ENCODE measurements at regions of chr12 and their contacts with region 1.

Region 1: DNA sequence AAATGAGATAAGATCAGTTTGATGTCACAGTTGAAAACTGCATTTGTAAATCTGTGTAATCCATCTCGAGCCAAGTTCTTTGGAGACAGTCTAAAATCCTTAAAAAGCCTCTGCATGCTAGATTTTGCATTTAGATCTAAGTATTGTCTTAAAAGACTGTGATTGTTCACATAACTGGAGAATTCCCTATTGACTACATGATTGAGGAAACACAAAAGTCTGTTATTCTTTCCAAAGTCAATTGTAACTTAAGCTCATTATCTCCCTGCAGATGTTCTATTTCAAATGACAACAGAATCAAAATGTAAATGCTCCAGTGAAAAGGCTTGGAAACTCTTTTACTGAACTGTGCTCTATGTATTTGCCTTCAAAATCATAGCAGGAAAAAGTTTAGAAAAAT is 77.8 kb downstream of the MYF5 start:
- DNase-seq: no peak
- ATAC-seq: no peak
- H3K4me3 ChIP-seq: no peak overlapping the region
- H3K27ac ChIP-seq: no peak overlapping the region
- H3K4me1 ChIP-seq: no peaks in the 10 kb centered on the region
- H3K27me3 ChIP-seq: no peaks in the 10 kb centered on the region
- CTCF ChIP-seq: no peak
- POLR2A ChIP-seq: no peak
- RAD21 ChIP-seq: no peak

Region 2: GRCh38 chr12:80513211-80513610 is 281.3 kb before region 1 on chr12:
- CTCF ChIA-PET with region 1: no interaction called
- POLR2A ChIA-PET with region 1: no interaction called
- dilution Hi-C with region 1: no loop called
- in situ Hi-C with region 1: no loop called
- intact Hi-C with region 1: no loop called
- DNase-seq: no peak
- ATAC-seq: no peak
- H3K4me3 ChIP-seq: no peak overlapping the region
- H3K27ac ChIP-seq: no peak overlapping the region
- H3K4me1 ChIP-seq: no peaks in the 10 kb centered on the region
- H3K27me3 ChIP-seq: no peaks in the 10 kb centered on the region
- CTCF ChIP-seq: no peak
- POLR2A ChIP-seq: no peak
- RAD21 ChIP-seq: no peak

Region 3: DNA sequence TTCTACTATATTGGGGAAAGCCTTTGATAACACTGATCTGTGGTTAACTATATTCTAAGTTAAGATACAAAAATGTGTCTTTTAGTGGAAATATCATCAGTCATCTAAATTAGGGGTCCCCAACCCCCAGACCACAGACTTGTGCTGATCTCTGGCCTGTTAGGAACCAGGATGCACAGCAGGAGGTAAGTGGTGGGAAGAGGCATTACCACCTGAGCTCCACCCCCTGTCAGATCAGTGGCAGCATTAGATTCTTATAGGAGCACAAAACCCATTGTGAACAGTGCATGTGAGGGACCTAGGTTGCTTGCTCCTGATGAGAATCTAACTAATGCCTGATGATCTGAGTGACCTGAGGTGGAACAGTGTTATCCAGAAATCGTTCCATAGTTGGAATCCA is 171.5 kb after region 1 on chr12:
- CTCF ChIA-PET with region 1: interaction called, 10 read pairs
- POLR2A ChIA-PET with region 1: no interaction called
- dilution Hi-C with region 1: no loop called
- in situ Hi-C with region 1: no loop called
- intact Hi-C with region 1: no loop called
- DNase-seq: no peak
- ATAC-seq: no peak
- H3K4me3 ChIP-seq: no peak overlapping the region
- H3K27ac ChIP-seq: no peak overlapping the region
- H3K4me1 ChIP-seq: no peaks in the 10 kb centered on the region
- H3K27me3 ChIP-seq: no peaks in the 10 kb centered on the region; the same call in 1 of the 2 replicates
- CTCF ChIP-seq: no peak
- POLR2A ChIP-seq: no peak
- RAD21 ChIP-seq: no peak